ENCODE measurements at regions of chr2 and their contacts with region 1.

Region 1: GRCh38 chr2:23926750-23927571 is at the start of gene ATAD2B:
- DNase-seq: peak; percentile 81 to 98 (median 92)
- ATAC-seq: peak; percentile 85 to 89 (median 88)
- H3K4me3 ChIP-seq: peak within 1 kb of the TSS; percentile 81 to 97
- H3K4me3 Mint-ChIP-seq: peak within 1 kb of the TSS; percentile 94 to 98 (median 97)
- H3K27ac ChIP-seq: peak within 1 kb of the TSS; percentile 99
- H3K27ac Mint-ChIP-seq: peak within 1 kb of the TSS; percentile 97
- H3K4me1 ChIP-seq: peaks cover 20% of the 10 kb centered on the region in 2 experiments
- H3K4me1 Mint-ChIP-seq: peaks cover 48 to 53% (median 50%) of the 10 kb centered on the region in 3 donors
- H3K27me3 ChIP-seq: no peaks in the 10 kb centered on the region
- H3K27me3 Mint-ChIP-seq: no peaks in the 10 kb centered on the region
- total RNA-seq, gene ATAD2B: 33.9 to 49.3 (median 40.6) TPM

Region 2: GRCh38 chr2:23824777-23825212 is 102.2 kb before region 1 on chr2:
- CTCF ChIA-PET with region 1: interaction called in 1 of 2 experiments, 17 read pairs
- POLR2A ChIA-PET with region 1: interaction called in 1 of 2 experiments, 3 read pairs
- DNase-seq: peak in 12 of 35 experiments; percentile 8 to 72 (median 16)
- ATAC-seq: peak; percentile 42 to 60 (median 56)
- H3K4me3 ChIP-seq: no peak overlapping the region
- H3K4me3 Mint-ChIP-seq: no peak overlapping the region
- H3K27ac ChIP-seq: no peak overlapping the region
- H3K27ac Mint-ChIP-seq: no peak overlapping the region
- H3K4me1 ChIP-seq: no peaks in the 10 kb centered on the region
- H3K4me1 Mint-ChIP-seq: no peaks in the 10 kb centered on the region
- H3K27me3 ChIP-seq: no peaks in the 10 kb centered on the region
- H3K27me3 Mint-ChIP-seq: no peaks in the 10 kb centered on the region

Region 3: GRCh38 chr2:23900927-23901322 is 26.0 kb before region 1 on chr2:
- CTCF ChIA-PET with region 1: interaction called in 1 of 2 experiments, 10 read pairs
- POLR2A ChIA-PET with region 1: interaction called, 3 read pairs
- DNase-seq: no peak
- ATAC-seq: no peak
- H3K4me3 ChIP-seq: no peak overlapping the region
- H3K4me3 Mint-ChIP-seq: no peak overlapping the region
- H3K27ac ChIP-seq: no peak overlapping the region
- H3K27ac Mint-ChIP-seq: no peak overlapping the region
- H3K4me1 ChIP-seq: peaks cover 0 to 8% of the 10 kb centered on the region in 2 experiments
- H3K4me1 Mint-ChIP-seq: peaks cover 56 to 58% (median 57%) of the 10 kb centered on the region in 3 donors
- H3K27me3 ChIP-seq: no peaks in the 10 kb centered on the region
- H3K27me3 Mint-ChIP-seq: no peaks in the 10 kb centered on the region

Region 4: DNA sequence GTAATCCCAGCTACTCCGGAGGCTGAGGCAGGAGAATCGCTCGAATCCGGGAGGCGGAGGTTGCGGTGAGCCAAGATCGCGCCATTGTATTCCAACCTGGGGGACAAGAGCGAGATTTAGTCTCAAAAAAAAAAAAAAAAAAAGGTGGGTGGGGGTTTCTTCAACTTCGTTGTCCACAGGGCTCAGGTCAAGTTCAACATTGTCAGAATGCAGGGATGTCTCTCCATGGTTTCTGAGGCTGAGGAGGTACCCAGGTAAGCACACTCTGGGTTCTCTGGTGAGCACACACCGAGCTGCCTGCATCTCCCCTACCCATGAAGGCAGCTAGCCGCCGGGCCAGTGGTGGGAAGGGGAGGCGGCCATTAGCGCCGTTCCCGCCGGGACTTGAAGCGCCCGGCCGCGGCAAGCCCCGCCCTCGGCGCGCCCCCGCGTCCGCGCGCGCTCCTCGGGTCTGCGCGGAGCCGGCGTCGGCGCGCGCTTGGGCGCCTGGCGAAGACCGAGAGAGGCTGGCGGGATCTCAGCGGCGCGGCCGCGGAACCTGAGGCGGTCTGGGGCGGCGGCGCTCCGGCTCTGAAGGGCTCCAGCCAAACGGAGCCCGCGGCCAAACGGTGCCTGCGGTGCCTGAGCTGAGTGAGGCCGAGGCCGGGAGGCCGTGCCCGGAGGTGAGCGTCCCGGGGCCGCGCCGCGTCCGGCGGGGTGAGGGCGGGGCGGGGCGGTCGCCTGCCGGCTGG is 13.2 kb after region 1 on chr2 and contains the start of gene UBXN2A:
- CTCF ChIA-PET with region 1: interaction called in 1 of 2 experiments, 54 read pairs
- POLR2A ChIA-PET with region 1: interaction called, 10 to 23 read pairs
- DNase-seq: peak; percentile 50 to 91 (median 68)
- ATAC-seq: peak; percentile 86 to 90 (median 89)
- H3K4me3 ChIP-seq: peak within 1 kb of the TSS; percentile 82 to 95
- H3K4me3 Mint-ChIP-seq: peak within 1 kb of the TSS; percentile 81 to 94 (median 87)
- H3K27ac ChIP-seq: no peak within 1 kb of the TSS
- H3K27ac Mint-ChIP-seq: peak within 1 kb of the TSS; percentile 84 to 86
- H3K4me1 ChIP-seq: peaks cover 5 to 16% of the 10 kb centered on the region in 2 experiments
- H3K4me1 Mint-ChIP-seq: peaks cover 28 to 40% (median 30%) of the 10 kb centered on the region in 3 donors
- H3K27me3 ChIP-seq: peaks cover 0 to 8% of the 10 kb centered on the region in 2 experiments
- H3K27me3 Mint-ChIP-seq: no peaks in the 10 kb centered on the region
- total RNA-seq, gene UBXN2A: 10.1 to 14.3 (median 12.3) TPM

Region 5: DNA sequence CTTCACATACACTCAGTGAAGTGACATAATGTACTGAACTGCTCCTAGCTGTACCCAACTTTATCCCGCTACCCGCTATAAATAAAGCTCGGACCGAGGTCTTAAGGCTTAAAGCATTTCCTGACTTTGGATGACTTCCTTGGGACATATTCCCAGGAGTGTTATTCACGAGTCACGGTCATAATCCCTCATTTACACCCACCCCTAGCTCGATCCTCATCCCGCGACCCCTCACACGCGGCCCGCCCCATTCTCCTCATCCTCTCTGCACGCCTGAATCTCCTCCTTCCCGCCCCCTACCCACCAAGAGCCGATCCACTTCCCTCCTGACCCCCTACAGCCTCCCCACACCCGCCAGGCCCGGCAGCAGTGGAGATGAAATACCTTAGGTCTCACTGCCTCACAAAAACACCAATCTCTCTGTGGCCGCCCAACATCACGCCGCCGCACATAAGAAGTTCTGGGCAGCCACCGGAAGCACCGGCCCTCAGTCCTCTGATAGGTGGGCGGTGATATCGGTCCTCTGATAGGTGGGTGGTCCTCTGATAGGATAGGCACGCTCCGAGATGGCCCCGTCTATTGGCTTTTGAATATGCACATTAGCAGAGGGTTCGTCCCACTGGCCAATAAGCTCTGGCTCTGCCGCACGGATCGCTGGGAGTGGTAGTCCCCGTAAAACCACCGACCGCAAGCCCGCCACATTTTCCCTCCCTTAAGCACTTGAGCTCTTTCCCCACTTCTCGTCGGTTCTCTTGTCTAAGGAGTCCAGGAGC is 120.2 kb after region 1 on chr2 and contains the start of gene WDCP:
- CTCF ChIA-PET with region 1: interaction called in 1 of 2 experiments, 12 read pairs
- POLR2A ChIA-PET with region 1: interaction called, 8 to 18 read pairs
- DNase-seq: peak; percentile 72 to 96 (median 91)
- ATAC-seq: peak; percentile 99 to 100 (median 100)
- H3K4me3 ChIP-seq: peak within 1 kb of the TSS; percentile 70
- H3K4me3 Mint-ChIP-seq: peak within 1 kb of the TSS; percentile 91 to 99 (median 94)
- H3K27ac ChIP-seq: peak within 1 kb of the TSS; percentile 34
- H3K27ac Mint-ChIP-seq: peak within 1 kb of the TSS; percentile 85 to 97
- H3K4me1 ChIP-seq: peaks cover 8 to 23% of the 10 kb centered on the region in 2 experiments
- H3K4me1 Mint-ChIP-seq: peaks cover 29 to 35% (median 34%) of the 10 kb centered on the region in 3 donors
- H3K27me3 ChIP-seq: peaks cover 2 to 28% of the 10 kb centered on the region in 2 experiments
- H3K27me3 Mint-ChIP-seq: peaks cover 0 to 1% of the 10 kb centered on the region in 2 donors
- total RNA-seq, gene WDCP: 6.1 to 18.9 (median 18.2) TPM

Region 6: DNA sequence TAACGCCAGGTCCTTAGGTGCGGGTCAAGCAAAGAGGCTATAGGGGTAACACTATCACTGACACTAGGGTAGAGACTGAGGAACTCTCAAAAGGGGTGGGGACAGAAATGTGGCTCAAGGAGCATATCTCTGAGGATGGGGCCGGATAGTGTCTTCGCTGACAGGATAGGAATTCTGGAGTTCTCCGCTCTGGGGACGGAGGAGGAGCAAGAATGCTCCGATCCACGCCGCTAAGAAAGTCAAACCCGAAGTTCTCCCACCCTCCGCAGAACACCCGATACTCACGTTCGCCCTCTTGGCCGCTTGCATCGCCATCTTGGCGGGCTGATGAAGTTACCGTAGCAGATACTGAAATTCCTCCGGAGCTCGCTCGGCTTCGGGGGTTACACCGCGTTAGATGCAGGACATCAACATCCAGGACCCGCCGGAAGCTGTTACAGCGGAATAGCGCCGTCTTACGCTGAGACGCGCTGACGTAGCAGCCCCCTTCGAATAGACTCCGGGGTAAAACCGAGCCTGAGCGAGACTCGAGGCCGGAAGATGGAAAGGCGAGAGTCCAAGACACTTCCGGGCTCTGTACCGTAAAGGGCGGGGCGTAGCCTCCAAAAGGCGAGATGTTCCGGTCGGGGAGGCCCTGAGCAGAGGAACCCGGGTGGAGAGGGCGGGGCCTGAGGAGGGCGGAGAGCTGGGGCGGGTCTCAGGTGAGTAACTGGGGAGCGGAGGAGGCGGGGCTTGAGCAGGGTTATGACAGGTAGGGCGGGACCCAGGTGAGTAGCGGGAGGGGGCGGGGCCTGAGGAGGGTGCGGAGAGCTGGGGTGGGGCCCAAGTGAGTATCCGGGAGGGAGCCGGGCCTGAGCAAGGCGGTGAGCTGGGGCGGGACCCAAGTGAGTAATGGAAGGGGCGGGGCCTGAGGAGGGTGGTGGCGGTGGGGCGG is 149.2 kb after region 1 on chr2 and contains the start of gene SF3B6:
- CTCF ChIA-PET with region 1: interaction called, 3 to 20 read pairs
- POLR2A ChIA-PET with region 1: interaction called, 3 to 20 read pairs
- DNase-seq: peak; percentile 98 to 100 (median 100)
- ATAC-seq: peak; percentile 84 to 88 (median 86)
- H3K4me3 ChIP-seq: peak within 1 kb of the TSS; percentile 93 to 97
- H3K4me3 Mint-ChIP-seq: peak within 1 kb of the TSS; percentile 96 to 100 (median 98)
- H3K27ac ChIP-seq: peak within 1 kb of the TSS; percentile 94
- H3K27ac Mint-ChIP-seq: peak within 1 kb of the TSS; percentile 98 to 100
- H3K4me1 ChIP-seq: peaks cover 7 to 25% of the 10 kb centered on the region in 2 experiments
- H3K4me1 Mint-ChIP-seq: peaks cover 33 to 39% (median 38%) of the 10 kb centered on the region in 3 donors
- H3K27me3 ChIP-seq: no peaks in the 10 kb centered on the region
- H3K27me3 Mint-ChIP-seq: no peaks in the 10 kb centered on the region
- total RNA-seq, gene SF3B6: 43.7 to 53.0 (median 47.0) TPM

Region 7: GRCh38 chr2:24084386-24085361 is 157.7 kb after region 1 on chr2 and contains the start of gene TP53I3:
- CTCF ChIA-PET with region 1: interaction called in 1 of 2 experiments, 11 read pairs
- POLR2A ChIA-PET with region 1: no interaction called
- DNase-seq: peak; percentile 36 to 91 (median 71)
- ATAC-seq: peak; percentile 90 to 97 (median 96)
- H3K4me3 ChIP-seq: peak within 1 kb of the TSS; percentile 55 to 61
- H3K4me3 Mint-ChIP-seq: peak within 1 kb of the TSS; percentile 77 to 90 (median 82)
- H3K27ac ChIP-seq: peak within 1 kb of the TSS; percentile 9
- H3K27ac Mint-ChIP-seq: peak within 1 kb of the TSS; percentile 52 to 61
- H3K4me1 ChIP-seq: peaks cover 0 to 20% of the 10 kb centered on the region in 2 experiments
- H3K4me1 Mint-ChIP-seq: peaks cover 13 to 16% (median 15%) of the 10 kb centered on the region in 3 donors
- H3K27me3 ChIP-seq: peaks cover 0 to 3% of the 10 kb centered on the region in 2 experiments
- H3K27me3 Mint-ChIP-seq: no peaks in the 10 kb centered on the region
- total RNA-seq, gene TP53I3: 0.47 to 0.68 (median 0.58) TPM